GM10248 (cell line): ENCODE measurements at regions of chr3 and their contacts with region 1.

Region 1: DNA sequence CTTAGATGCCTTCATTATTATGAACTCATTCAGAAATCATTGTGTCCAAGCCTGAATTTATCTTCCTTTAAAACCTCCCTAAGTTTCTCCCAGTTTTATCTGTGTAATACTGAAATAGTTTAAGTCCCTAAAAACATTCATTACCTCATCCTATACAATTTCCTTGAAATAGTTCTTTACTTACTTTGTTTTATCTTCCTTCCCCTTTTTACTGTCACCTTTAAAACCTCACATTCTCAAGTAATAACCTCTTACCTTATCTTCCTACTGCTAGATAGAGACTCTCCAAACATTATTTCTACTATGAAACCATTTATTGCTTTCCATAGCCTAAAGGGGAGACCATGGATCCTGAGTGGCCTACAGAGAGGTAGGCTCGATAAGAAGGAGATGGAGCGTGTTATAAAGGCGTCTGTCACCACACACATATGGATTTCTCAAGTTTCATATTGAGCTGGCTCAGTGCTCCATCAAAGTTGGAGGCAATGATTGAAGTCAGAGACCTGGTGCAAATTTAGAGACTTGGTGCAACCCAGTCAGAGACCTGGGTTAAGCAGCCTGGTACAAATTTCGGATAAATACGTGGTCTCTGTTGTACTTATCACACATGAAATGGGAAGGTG is 140.4 kb downstream of the NFKBIZ start:
- DNase-seq: no peak
- CTCF ChIP-seq: no peak

Region 2: DNA sequence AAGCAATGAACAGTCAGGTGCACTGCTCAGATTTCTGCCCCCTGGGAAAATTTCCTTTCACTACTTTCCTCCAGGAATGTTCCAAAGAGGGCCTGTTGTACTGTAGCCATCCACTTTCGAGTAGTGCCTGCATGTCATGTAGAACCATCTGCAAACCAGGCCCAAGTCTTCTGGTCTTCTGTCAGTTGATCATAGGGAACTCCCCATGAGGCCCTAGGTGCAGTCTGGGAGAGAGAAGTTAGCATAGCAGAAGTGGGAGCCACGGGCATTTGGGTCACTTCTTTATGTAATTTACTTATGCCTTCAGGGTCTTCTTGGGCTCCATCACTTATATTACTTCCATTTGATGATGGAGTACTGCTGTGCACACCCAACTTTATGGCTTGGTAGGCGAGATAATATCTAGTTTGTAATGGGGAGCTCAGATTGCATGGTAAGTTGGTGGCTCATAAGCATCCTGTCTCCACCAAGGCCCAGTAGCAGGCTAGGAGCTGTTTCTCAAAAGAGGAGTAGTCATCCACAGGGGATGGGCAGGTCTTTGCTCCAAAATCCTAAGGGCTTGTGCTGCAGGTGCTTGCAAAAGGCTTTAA is 11.0 kb after region 1 on chr3:
- CTCF ChIA-PET with region 1: interaction called, 14 read pairs
- POLR2A ChIA-PET with region 1: no interaction called
- DNase-seq: no peak
- CTCF ChIP-seq: no peak

Region 3: DNA sequence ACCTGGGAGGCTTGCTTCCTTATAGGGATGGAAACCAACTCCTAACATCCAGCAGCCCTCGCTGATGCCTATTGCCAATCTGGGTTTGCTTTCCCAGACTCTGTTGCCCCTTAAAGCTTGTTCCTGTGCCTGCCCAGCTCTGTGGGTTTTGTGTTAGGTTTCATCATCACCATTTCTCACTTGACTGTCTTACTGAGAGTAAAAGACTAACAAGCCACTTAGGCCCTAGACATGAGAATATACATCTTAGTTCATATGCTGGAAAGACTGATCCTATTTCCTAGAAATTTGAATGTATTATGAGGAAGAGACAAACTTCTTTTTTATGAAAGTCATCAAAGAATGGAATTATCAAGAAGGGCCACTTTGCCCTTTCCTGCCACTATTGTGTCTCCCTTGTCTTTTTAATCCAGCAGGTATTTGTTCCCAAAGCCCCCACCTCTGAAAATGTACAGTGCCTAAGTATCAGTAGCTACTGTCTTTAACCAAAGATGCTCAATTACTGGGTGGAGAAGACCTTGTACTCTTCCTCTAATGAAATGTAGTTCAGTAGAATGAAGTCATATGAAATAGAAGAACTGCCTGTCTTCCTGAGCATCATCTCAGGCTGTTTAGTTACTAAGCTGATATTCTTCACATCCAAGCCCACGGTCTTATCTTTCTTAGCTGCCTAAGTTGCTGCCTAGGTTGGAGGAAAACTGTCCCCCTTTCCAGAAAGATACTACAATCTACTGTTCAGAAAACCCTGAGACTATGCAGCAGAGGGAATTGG is 385.4 kb after region 1 on chr3:
- CTCF ChIA-PET with region 1: no interaction called
- POLR2A ChIA-PET with region 1: no interaction called
- DNase-seq: no peak
- CTCF ChIP-seq: no peak